ENCODE measurements at regions of chr10 and their contacts with region 1.

Region 1: GRCh38 chr10:24324651-24325050 is 115.7 kb downstream of the KIAA1217 start:
- DNase-seq: no peak
- ATAC-seq: no peak

Region 2: DNA sequence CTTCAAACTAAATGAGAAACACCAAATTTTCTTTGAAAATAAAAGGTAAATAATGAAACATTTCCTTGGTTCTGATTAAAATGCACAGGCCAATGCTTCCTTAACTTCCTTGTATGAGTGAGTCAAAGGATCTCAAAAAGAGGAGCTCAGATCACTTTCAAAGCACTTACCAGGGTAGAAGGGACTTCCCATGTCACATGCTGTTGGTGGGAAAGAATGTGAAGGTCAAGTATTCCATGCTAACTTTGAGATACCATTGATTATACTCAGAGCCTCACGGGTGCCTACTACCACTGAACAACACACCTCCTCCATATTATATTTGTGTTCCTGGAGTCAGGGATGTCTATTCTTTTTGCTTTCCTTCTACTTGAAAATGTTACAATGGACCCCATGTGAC is 349.2 kb before region 1 on chr10:
- intact Hi-C with region 1: loop called (anchors 5 kb)
- DNase-seq: no peak
- ATAC-seq: no peak

Region 3: DNA sequence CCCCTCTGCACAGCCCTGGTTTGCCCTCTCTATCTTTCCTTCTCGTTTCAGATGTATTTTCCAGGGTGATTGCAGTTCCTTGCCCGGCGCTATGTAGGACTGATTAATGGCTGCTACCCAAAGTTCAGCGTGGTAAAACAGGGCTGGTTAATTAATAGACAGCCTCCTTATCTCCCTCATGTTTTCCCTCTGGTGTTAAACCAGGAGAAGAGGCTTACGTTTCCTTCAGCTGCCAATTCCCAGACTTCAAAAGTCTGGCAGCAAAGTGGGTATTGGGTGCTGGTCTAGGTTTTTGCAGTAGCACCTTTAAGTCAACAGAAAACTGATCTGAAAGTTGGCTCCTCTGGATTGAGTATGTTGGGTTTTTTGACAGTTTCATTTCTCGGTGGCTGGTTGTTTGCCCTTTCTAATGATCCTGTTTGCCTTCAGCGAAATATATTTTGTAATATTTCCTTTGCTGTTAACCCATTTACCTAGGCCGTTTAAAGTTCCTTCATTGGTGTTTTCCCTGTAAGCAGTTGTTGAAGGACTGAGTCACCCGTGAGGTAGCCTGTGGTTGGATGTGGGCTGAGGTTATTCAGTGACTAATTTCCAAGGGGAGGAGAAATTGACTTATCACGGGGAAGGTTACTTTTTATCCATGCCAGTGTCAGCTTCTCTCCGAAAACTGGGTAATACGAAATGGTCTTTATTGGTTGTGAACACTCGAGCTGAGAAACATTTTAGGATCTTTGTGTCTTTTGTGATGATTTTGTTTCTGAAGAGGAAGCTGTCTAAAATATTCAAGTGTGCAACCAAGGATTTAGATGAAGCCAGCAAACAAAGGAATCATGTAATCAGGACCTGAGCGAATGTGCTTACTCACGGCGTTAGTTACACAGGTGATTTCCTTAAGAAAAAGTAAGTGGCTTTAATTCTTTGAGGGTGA is 141.5 kb after region 1 on chr10:
- intact Hi-C with region 1: no loop called
- DNase-seq: no peak
- ATAC-seq: peak; percentile 27